B cell (primary cell): ENCODE measurements at regions of chr17 and their contacts with region 1.

Region 1: GRCh38 chr17:47776330-47777197 is 43.5 kb downstream of the TBX21 start:
- DNase-seq: peak; percentile 66
- ATAC-seq: peak; percentile 65
- H3K4me3 ChIP-seq: no peak overlapping the region
- H3K4me3 Mint-ChIP-seq: no peak overlapping the region
- H3K27ac ChIP-seq: no peak overlapping the region
- H3K27ac Mint-ChIP-seq: no peak overlapping the region
- H3K4me1 ChIP-seq: no peaks in the 10 kb centered on the region
- H3K4me1 Mint-ChIP-seq: no peaks in the 10 kb centered on the region
- H3K27me3 ChIP-seq: peaks cover 0 to 48% (median 25%) of the 10 kb centered on the region in 4 experiments
- H3K27me3 Mint-ChIP-seq: peaks cover 57% of the 10 kb centered on the region
- CTCF ChIP-seq: peak; percentile 84

Region 2: GRCh38 chr17:47763913-47764582 is 12.5 kb before region 1 on chr17:
- CTCF ChIA-PET with region 1: no interaction called
- POLR2A ChIA-PET with region 1: no interaction called
- intact Hi-C with region 1: no loop called
- DNase-seq: no peak
- ATAC-seq: no peak
- H3K4me3 ChIP-seq: no peak overlapping the region
- H3K4me3 Mint-ChIP-seq: no peak overlapping the region
- H3K27ac ChIP-seq: no peak overlapping the region
- H3K27ac Mint-ChIP-seq: no peak overlapping the region
- H3K4me1 ChIP-seq: no peaks in the 10 kb centered on the region
- H3K4me1 Mint-ChIP-seq: no peaks in the 10 kb centered on the region
- H3K27me3 ChIP-seq: peaks cover 0 to 5% (median 3%) of the 10 kb centered on the region in 4 experiments
- H3K27me3 Mint-ChIP-seq: peaks cover 25% of the 10 kb centered on the region
- CTCF ChIP-seq: no peak

Region 3: GRCh38 chr17:47802341-47803022 is 25.9 kb after region 1 on chr17:
- CTCF ChIA-PET with region 1: interaction called, 5 read pairs
- POLR2A ChIA-PET with region 1: no interaction called
- intact Hi-C with region 1: loop called (anchors 2 kb)
- DNase-seq: peak; percentile 68
- ATAC-seq: peak; percentile 79
- H3K4me3 ChIP-seq: no peak overlapping the region
- H3K4me3 Mint-ChIP-seq: no peak overlapping the region
- H3K27ac ChIP-seq: no peak overlapping the region
- H3K27ac Mint-ChIP-seq: no peak overlapping the region
- H3K4me1 ChIP-seq: no peaks in the 10 kb centered on the region
- H3K4me1 Mint-ChIP-seq: peaks cover 1% of the 10 kb centered on the region
- H3K27me3 ChIP-seq: peaks cover 0 to 8% (median 0%) of the 10 kb centered on the region in 4 experiments
- H3K27me3 Mint-ChIP-seq: peaks cover 7% of the 10 kb centered on the region
- CTCF ChIP-seq: peak; percentile 71